ENCODE measurements at regions of chr10 and their contacts with region 1.

Region 1: GRCh38 chr10:21953585-21954057 is 49.9 kb downstream of the DNAJC1 start:
- DNase-seq: peak; percentile 64
- H3K4me3 ChIP-seq: no peak overlapping the region
- H3K27ac ChIP-seq: no peak overlapping the region
- H3K4me1 ChIP-seq: no peaks in the 10 kb centered on the region
- H3K27me3 ChIP-seq: no peaks in the 10 kb centered on the region
- CTCF ChIP-seq: peak; percentile 38 to 61

Region 2: DNA sequence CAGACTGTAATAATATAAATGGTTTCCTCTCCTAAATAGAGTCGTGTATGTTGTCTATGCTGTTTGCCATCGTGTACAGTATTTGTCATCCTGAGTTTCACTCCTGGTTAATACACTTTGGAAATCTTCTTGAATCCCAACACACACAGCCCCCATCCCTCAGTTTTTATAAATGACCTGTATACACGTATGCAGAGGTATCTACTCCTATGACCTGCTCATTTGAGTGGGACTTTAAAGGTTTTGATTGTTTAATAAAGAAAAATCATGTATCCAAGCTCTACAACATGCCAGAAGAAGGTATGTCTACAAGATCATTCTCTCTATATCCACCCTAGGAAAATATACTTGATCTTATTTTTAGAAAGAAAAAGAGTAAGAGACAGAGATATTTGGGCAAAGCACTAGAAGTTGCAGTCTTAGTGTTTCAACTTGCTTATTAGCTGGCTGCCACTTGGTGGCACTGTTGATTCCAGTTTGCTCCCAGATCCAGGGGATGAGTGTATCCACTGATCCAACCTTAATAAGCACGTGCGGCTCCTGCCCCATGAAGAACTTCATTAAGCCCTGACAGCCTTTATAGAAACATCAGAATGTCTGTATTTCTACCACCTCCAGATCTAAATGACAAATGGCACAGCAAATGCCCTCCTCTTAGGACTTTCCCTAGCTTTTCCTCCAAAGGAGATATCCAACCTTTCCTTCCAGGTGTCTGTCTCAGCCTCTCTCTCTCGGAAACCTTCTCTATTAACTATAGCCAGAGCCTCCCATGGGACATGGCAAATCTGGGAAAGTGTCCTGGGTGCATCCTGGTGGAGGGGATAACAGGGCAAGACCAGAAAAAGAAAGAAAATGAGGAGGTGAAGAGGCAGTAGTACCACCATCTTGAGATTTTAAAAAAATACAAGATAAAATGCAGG is 875.0 kb before region 1 on chr10:
- CTCF ChIA-PET with region 1: interaction called, 35 read pairs
- dilution Hi-C with region 1: no loop called
- in situ Hi-C with region 1: no loop called
- intact Hi-C with region 1: loop called (anchors 5 kb)
- DNase-seq: peak; percentile 52
- H3K4me3 ChIP-seq: no peak overlapping the region
- H3K27ac ChIP-seq: no peak overlapping the region
- H3K4me1 ChIP-seq: no peaks in the 10 kb centered on the region
- H3K27me3 ChIP-seq: no peaks in the 10 kb centered on the region
- CTCF ChIP-seq: peak; percentile 81 to 82

Region 3: GRCh38 chr10:21145751-21146435 is 807.7 kb before region 1 on chr10:
- CTCF ChIA-PET with region 1: interaction called, 32 read pairs
- dilution Hi-C with region 1: no loop called
- in situ Hi-C with region 1: no loop called
- intact Hi-C with region 1: no loop called
- DNase-seq: no peak
- H3K4me3 ChIP-seq: no peak overlapping the region
- H3K27ac ChIP-seq: no peak overlapping the region
- H3K4me1 ChIP-seq: no peaks in the 10 kb centered on the region
- H3K27me3 ChIP-seq: no peaks in the 10 kb centered on the region
- CTCF ChIP-seq: no peak

Region 4: GRCh38 chr10:21533467-21534279 is 419.9 kb before region 1 on chr10 and contains the start of gene MLLT10:
- CTCF ChIA-PET with region 1: interaction called, 7 read pairs
- dilution Hi-C with region 1: no loop called
- in situ Hi-C with region 1: no loop called
- intact Hi-C with region 1: loop called (anchors 5 kb)
- DNase-seq: peak; percentile 92
- H3K4me3 ChIP-seq: peak within 1 kb of the TSS; percentile 47 to 63 (median 59)
- H3K27ac ChIP-seq: peak within 1 kb of the TSS; percentile 74
- H3K4me1 ChIP-seq: peaks cover 12% of the 10 kb centered on the region
- H3K27me3 ChIP-seq: no peaks in the 10 kb centered on the region
- CTCF ChIP-seq: peak; percentile 15 to 39
- total RNA-seq, gene MLLT10: 33.7 to 38.2 TPM